ENCODE measurements at regions of chr21 and their contacts with region 1.

Region 1: DNA sequence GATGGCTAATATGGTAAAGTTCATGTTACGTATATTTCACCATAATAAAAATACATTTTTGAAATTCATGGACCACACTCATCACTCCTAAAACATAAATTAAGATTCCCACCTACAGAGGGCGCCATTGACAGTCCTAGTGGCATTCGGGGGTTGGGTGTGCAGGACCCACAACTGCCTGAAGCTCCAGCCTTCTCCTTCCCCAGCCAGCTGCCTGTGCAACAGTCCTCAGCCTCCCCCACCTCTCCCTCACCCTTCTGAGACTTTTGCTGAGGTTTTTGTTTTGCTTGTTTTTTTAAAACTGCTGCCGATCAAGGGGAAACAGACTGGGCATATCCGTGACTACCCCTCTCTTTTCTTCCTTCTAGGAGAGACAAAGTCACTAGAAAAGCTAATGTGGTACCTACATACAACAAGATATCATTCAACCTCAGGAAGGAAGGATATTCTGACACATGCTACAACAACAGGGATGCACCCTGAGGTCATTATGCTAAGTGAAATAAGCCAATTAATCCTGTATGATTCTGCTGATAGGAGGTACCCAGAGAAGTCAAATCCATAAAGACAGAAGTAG is 9.2 kb upstream of the EVA1C start:
- DNase-seq: peak; percentile 69 to 71
- H3K4me3 ChIP-seq: no peak overlapping the region
- H3K27ac ChIP-seq: no peak overlapping the region
- H3K4me1 ChIP-seq: no peaks in the 10 kb centered on the region
- H3K27me3 ChIP-seq: no peaks in the 10 kb centered on the region
- CTCF ChIP-seq: peak; percentile 31 to 81 (median 72)
- POLR2A ChIP-seq: no peak

Region 2: GRCh38 chr21:32569261-32570230 is 166.3 kb after region 1 on chr21:
- intact Hi-C with region 1: loop called (anchors 5 kb)
- DNase-seq: peak; percentile 79 to 84
- H3K4me3 ChIP-seq: peak overlapping the region in 2 of 3 donors; percentile 32 to 81
- H3K27ac ChIP-seq: peak overlapping the region; percentile 63 to 87 (median 67)
- H3K4me1 ChIP-seq: no peaks in the 10 kb centered on the region
- H3K27me3 ChIP-seq: no peaks in the 10 kb centered on the region
- CTCF ChIP-seq: peak; percentile 33 to 82 (median 72)
- POLR2A ChIP-seq: no peak

Region 3: GRCh38 chr21:32604464-32604863 is 201.2 kb after region 1 on chr21:
- intact Hi-C with region 1: loop called (anchors 5 kb)
- DNase-seq: no peak
- H3K4me3 ChIP-seq: no peak overlapping the region
- H3K27ac ChIP-seq: no peak overlapping the region
- H3K4me1 ChIP-seq: no peaks in the 10 kb centered on the region
- H3K27me3 ChIP-seq: no peaks in the 10 kb centered on the region
- CTCF ChIP-seq: no peak
- POLR2A ChIP-seq: no peak